ENCODE measurements at regions of chr19 and their contacts with region 1.

Region 1: GRCh38 chr19:28710278-28710677 is 502.7 kb downstream of the UQCRFS1 start:
- DNase-seq: no peak
- ATAC-seq: no peak

Region 2: DNA sequence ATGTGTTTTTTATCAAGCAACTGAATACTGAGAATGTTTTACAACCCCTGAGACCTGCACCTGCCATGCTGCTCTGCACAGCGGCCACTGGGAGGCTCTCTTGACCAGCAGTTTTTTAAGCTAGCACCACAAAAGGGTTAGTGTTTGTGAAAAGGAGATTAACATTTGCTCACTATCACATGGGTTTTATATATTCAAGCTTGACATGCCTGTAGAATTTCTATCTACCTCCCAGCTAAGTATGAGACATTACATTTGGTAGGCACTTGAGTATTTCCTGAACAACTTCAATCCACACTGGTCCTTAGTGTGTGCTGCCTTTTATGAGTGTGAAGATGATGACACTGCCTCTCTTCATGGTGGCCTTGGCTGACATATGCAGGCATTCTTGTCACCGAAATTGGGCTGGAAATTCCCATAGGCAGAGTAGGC is 736.2 kb before region 1 on chr19:
- intact Hi-C with region 1: loop called (anchors 5 kb)
- DNase-seq: no peak
- ATAC-seq: no peak

Region 3: GRCh38 chr19:28612275-28612769 is 98.0 kb before region 1 on chr19:
- intact Hi-C with region 1: no loop called
- DNase-seq: no peak
- ATAC-seq: no peak

Region 4: GRCh38 chr19:28764066-28764465 is 53.8 kb after region 1 on chr19:
- intact Hi-C with region 1: no loop called
- DNase-seq: no peak
- ATAC-seq: no peak

Region 5: GRCh38 chr19:29446361-29446760 is 736.1 kb after region 1 on chr19:
- intact Hi-C with region 1: no loop called
- DNase-seq: no peak
- ATAC-seq: no peak